Colonic mucosa (tissue), 4 donors: ENCODE measurements at regions of chr3 and their contacts with region 1.

Region 1: GRCh38 chr3:39383045-39383880 is at the start of gene SLC25A38:
- DNase-seq: peak; percentile 90
- H3K4me3 ChIP-seq: peak within 1 kb of the TSS; percentile 85
- H3K27ac ChIP-seq: peak within 1 kb of the TSS; percentile 95
- H3K4me1 ChIP-seq: peaks cover 11% of the 10 kb centered on the region
- H3K27me3 ChIP-seq: no peaks in the 10 kb centered on the region
- CTCF ChIP-seq: peak; percentile 36
- total RNA-seq, gene SLC25A38: 41.7 to 45.5 TPM

Region 2: GRCh38 chr3:39126532-39127071 is 256.7 kb before region 1 on chr3:
- intact Hi-C with region 1: loop called (anchors 10 kb)
- DNase-seq: peak; percentile 71
- H3K4me3 ChIP-seq: no peak overlapping the region
- H3K27ac ChIP-seq: no peak overlapping the region
- H3K4me1 ChIP-seq: peaks cover 5% of the 10 kb centered on the region
- H3K27me3 ChIP-seq: no peaks in the 10 kb centered on the region
- CTCF ChIP-seq: peak; percentile 26

Region 3: DNA sequence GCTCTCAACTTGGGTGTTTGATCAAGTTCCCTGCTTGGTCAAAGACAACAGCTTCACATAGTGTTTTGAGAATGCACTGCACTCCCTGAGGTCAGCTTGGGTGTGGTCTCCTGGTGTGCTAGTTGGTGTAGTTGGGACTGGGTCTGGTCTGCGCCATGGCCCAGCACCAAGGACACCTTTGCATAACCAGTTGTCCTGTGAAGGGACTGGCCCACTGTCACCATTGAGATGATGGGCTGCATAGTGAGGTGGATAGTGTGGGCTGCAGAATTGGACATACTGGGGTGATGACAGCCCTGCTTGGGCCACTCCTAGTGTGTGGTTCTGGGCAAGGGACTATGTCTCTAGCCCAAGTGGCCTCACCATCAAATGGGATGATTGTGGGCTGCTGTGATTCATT is 32.7 kb after region 1 on chr3:
- intact Hi-C with region 1: no loop called
- DNase-seq: no peak
- H3K4me3 ChIP-seq: no peak overlapping the region
- H3K27ac ChIP-seq: no peak overlapping the region
- H3K4me1 ChIP-seq: peaks cover 4% of the 10 kb centered on the region
- H3K27me3 ChIP-seq: no peaks in the 10 kb centered on the region
- CTCF ChIP-seq: no peak